ENCODE measurements at regions of chr3 and their contacts with region 1.

Region 1: DNA sequence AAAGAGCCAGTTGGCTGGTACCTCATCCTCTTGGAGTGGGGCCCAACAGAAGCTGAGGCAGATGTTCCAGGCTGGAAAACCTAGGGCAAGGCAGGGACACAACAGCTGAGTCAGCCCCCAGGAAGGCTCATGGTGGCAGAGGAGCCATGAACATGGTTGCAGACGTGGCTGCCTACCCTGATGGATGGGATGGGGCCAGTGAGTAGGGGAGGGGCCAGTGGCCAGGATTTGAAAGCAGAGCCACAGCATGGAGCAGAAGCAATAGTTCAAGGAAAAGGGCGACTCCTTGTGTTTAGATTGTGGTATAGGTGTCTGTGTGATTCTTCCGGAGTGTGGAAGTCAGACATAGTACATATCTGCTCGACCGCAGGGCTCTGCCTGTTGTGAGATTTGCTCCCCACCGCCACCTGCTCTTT is 24.2 kb downstream of the PXYLP1 start:
- DNase-seq: peak; percentile 63
- H3K4me3 Mint-ChIP-seq: no peak overlapping the region
- H3K27ac Mint-ChIP-seq: no peak overlapping the region
- H3K4me1 Mint-ChIP-seq: peaks cover 22% of the 10 kb centered on the region
- H3K27me3 Mint-ChIP-seq: no peaks in the 10 kb centered on the region

Region 2: GRCh38 chr3:141243271-141243707 is 12.6 kb before region 1 on chr3:
- CTCF ChIA-PET with region 1: interaction called, 13 read pairs
- POLR2A ChIA-PET with region 1: no interaction called
- intact Hi-C with region 1: no loop called
- DNase-seq: peak; percentile 72
- H3K4me3 Mint-ChIP-seq: peak overlapping the region; percentile 25
- H3K27ac Mint-ChIP-seq: no peak overlapping the region
- H3K4me1 Mint-ChIP-seq: peaks cover 22% of the 10 kb centered on the region
- H3K27me3 Mint-ChIP-seq: no peaks in the 10 kb centered on the region

Region 3: GRCh38 chr3:141266797-141267555 is 11.1 kb after region 1 on chr3:
- CTCF ChIA-PET with region 1: interaction called, 20 read pairs
- POLR2A ChIA-PET with region 1: interaction called, 5 read pairs
- intact Hi-C with region 1: no loop called
- DNase-seq: peak; percentile 56
- H3K4me3 Mint-ChIP-seq: peak overlapping the region; percentile 75
- H3K27ac Mint-ChIP-seq: peak overlapping the region; percentile 86
- H3K4me1 Mint-ChIP-seq: peaks cover 31% of the 10 kb centered on the region
- H3K27me3 Mint-ChIP-seq: no peaks in the 10 kb centered on the region

Measured in activated CD4-positive, alpha-beta memory T cell treated with anti-CD3 and anti-CD28 coated beads for 36 hours (primary cell).